ENCODE measurements at regions of chr12 and their contacts with region 1.

Region 1: GRCh38 chr12:4276524-4277204 is 3.1 kb downstream of the CCND2 start:
- DNase-seq: peak; percentile 69
- H3K4me3 ChIP-seq: no peak overlapping the region
- H3K27ac ChIP-seq: no peak overlapping the region
- H3K27me3 ChIP-seq: peaks cover 65% of the 10 kb centered on the region
- CTCF ChIP-seq: peak; percentile 97

Region 2: DNA sequence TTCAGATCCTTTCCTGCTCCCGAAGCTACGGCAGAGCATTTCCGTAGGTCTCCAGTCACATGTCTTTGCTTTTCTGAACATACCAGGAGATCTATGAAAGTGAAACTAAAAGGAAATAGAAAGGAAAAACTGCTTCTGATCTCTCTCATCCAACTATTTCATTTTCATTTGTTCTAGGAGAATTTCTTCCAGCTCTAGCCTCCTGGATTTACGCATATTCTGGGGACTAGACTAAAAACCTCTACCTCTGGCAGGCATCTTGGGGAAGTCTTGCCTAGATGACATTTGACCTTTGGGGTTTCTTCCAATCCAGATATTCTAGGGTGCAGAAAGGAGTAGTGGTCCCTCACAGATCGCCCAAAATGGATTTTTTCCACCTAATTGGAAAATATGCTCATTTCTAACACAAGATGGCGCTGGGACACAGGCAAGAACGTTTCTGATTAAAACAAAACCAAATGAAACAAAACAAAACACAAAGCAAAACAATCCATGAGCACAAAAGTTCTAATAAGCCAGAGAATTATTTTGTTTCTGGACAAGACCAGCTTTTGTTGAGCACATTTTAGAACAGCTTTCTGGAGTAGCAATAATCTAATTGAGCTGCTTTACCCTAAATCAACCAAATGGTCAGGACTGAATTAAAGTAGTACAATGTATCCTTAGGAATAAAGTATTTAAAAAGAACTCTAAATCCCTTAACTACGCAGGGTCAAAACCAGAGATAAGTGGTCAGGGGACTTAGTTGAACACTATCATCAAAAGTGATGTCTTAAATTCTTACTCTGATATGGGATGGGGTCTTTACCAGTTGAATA is 391.2 kb before region 1 on chr12:
- CTCF ChIA-PET with region 1: interaction called, 165 read pairs
- POLR2A ChIA-PET with region 1: interaction called, 3 read pairs
- DNase-seq: peak; percentile 8
- H3K4me3 ChIP-seq: peak overlapping the region; percentile 59
- H3K27ac ChIP-seq: no peak overlapping the region
- H3K27me3 ChIP-seq: peaks cover 14% of the 10 kb centered on the region
- CTCF ChIP-seq: peak; percentile 86

Region 3: DNA sequence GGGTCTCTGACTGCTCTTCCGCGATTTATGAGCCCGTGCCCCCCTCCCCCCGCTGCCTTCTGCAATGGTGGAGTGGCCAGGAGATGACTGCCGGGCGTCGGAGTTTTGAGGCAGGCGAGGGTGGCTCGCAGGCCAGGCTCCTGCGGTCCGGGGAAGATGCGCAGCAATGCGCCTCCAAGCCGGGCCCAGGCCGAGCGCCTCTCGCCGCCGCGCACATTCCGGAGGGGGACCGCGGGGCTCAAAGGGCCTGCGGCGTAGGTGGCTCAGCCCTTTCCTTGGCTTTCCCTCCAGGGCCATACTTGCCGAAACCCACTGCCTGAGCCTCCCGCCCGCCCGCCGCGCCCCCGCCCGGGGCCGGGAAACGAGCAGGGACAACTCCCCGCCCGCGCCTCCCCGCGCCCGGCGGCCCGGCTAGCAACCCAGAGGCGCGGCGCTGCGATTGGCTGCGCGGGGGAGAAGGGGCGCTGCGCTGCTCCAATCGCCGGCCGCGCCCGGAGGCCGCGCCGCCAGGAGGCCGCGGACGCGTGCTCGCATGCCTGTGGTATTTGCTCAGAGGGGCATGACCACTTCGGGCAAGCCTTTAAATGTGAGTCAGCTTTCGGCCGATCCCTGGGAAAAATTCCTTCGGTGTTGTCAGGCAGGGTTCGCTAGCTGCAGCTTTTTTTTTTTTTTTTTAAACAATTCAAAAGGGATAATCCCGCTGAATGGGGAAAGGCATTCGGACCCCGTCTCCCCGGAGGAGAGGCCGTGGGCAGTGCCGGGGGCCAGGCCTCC is 245.5 kb before region 1 on chr12:
- CTCF ChIA-PET with region 1: interaction called, 89 read pairs
- POLR2A ChIA-PET with region 1: interaction called, 4 read pairs
- DNase-seq: peak; percentile 96
- H3K4me3 ChIP-seq: peak overlapping the region; percentile 48
- H3K27ac ChIP-seq: peak overlapping the region; percentile 89
- H3K27me3 ChIP-seq: peaks cover 9% of the 10 kb centered on the region
- CTCF ChIP-seq: no peak

Region 4: GRCh38 chr12:4112734-4113325 is 163.8 kb before region 1 on chr12:
- CTCF ChIA-PET with region 1: interaction called, 107 read pairs
- POLR2A ChIA-PET with region 1: no interaction called
- DNase-seq: no peak
- H3K4me3 ChIP-seq: no peak overlapping the region
- H3K27ac ChIP-seq: no peak overlapping the region
- H3K27me3 ChIP-seq: peaks cover 6% of the 10 kb centered on the region
- CTCF ChIP-seq: no peak

Region 5: DNA sequence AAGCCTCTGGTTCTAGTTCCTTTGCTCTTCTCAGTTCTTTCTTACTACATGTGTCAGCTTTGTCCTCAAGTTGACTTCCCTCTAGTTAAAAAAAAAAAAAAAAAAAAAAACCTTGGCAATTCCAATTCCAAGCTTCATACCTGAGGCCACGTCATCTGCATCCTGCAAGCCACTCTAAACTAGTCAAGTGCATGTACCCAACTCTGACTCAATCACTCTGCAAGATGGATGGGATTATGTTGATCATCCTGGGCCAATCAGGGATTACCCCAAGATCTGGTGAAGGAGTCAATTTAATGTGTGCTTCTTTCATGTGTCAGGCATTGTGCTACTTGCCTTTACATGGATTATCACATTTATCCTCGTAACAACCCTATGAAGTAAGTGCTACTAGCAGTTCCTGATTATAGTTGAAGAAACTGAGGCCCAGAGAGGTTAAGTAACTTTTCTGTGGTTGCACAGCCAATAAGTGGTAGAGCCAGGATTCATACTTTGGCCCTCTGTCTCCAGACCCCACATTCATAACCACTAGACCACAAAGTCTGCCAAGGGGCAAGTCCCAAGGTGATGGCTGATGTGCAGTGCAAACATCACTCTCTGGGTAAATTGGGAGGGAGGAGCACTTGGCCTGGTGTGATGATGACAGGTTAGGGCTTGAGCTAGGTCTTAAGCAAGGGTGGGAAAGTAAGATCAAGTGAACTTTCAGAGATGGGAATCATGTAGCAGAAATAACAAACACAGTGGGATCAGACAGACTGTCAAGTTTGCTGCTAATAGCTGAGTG is 20.4 kb before region 1 on chr12:
- CTCF ChIA-PET with region 1: interaction called, 14 read pairs
- POLR2A ChIA-PET with region 1: no interaction called
- DNase-seq: no peak
- H3K4me3 ChIP-seq: no peak overlapping the region
- H3K27ac ChIP-seq: no peak overlapping the region
- H3K27me3 ChIP-seq: no peaks in the 10 kb centered on the region
- CTCF ChIP-seq: no peak

Region 6: DNA sequence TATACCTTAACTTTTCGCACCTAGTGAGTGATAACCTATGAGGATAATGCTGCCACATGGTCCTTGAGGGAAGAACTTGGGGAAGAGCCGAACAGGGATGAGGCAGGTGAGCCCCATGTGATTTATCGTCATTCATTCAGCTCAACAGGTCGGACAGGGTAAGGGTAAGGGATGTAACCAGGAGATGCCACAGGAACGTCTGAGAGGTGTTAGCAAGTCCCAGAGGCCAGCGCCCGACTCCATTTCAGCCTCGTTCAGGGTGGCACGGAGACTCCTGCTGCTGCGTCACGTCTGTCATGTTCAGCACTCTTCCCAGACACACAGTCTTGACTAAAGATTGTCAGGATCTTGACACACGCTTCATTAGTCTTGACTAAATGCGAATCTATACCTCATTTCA is 21.0 kb after region 1 on chr12:
- CTCF ChIA-PET with region 1: interaction called, 18 read pairs
- POLR2A ChIA-PET with region 1: no interaction called
- DNase-seq: no peak
- H3K4me3 ChIP-seq: no peak overlapping the region
- H3K27ac ChIP-seq: no peak overlapping the region
- H3K27me3 ChIP-seq: peaks cover 4% of the 10 kb centered on the region
- CTCF ChIP-seq: no peak

Region 7: DNA sequence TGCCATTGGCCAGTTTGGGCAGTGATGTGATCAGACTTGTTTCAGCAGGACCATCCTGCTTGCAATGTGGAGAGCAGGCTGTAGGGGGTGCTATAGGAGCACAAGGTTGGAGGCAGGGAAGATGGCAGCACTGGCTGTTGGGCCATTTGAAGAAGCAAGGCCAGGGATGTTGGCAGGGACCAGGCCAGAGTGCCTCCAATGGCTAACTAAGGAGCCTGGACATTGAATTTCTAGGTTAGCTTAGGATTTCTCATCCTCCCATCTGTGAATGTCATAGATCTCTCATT is 79.3 kb after region 1 on chr12:
- CTCF ChIA-PET with region 1: no interaction called
- POLR2A ChIA-PET with region 1: no interaction called
- DNase-seq: no peak
- H3K4me3 ChIP-seq: no peak overlapping the region
- H3K27ac ChIP-seq: no peak overlapping the region
- H3K27me3 ChIP-seq: no peaks in the 10 kb centered on the region
- CTCF ChIP-seq: peak; percentile 54

Region 8: GRCh38 chr12:4421590-4422031 is 144.9 kb after region 1 on chr12:
- CTCF ChIA-PET with region 1: no interaction called
- POLR2A ChIA-PET with region 1: no interaction called
- DNase-seq: no peak
- H3K4me3 ChIP-seq: no peak overlapping the region
- H3K27ac ChIP-seq: no peak overlapping the region
- H3K27me3 ChIP-seq: peaks cover 20% of the 10 kb centered on the region
- CTCF ChIP-seq: peak; percentile 68

Region 9: GRCh38 chr12:4857472-4858291 is 581.0 kb after region 1 on chr12:
- CTCF ChIA-PET with region 1: interaction called, 3 read pairs
- POLR2A ChIA-PET with region 1: interaction called, 15 read pairs
- DNase-seq: peak; percentile 20
- H3K4me3 ChIP-seq: no peak overlapping the region
- H3K27ac ChIP-seq: no peak overlapping the region
- H3K27me3 ChIP-seq: peaks cover 13% of the 10 kb centered on the region
- CTCF ChIP-seq: peak; percentile 97

Measured in AG04450 (cell line).